CD4-positive, alpha-beta T cell (primary cell): ENCODE measurements at regions of chr2 and their contacts with region 1.

Region 1: GRCh38 chr2:207896525-207897295 is 127.0 kb upstream of the FZD5 start:
- DNase-seq: no peak
- ATAC-seq: no peak
- H3K4me3 ChIP-seq: no peak overlapping the region
- H3K4me3 Mint-ChIP-seq: no peak overlapping the region
- H3K27ac ChIP-seq: no peak overlapping the region
- H3K27ac Mint-ChIP-seq: no peak overlapping the region
- H3K4me1 ChIP-seq: no peaks in the 10 kb centered on the region
- H3K4me1 Mint-ChIP-seq: no peaks in the 10 kb centered on the region
- H3K27me3 ChIP-seq: no peaks in the 10 kb centered on the region
- H3K27me3 Mint-ChIP-seq: no peaks in the 10 kb centered on the region
- CTCF ChIP-seq: no peak

Region 2: GRCh38 chr2:207274530-207275189 is 622.0 kb before region 1 on chr2:
- CTCF ChIA-PET with region 1: no interaction called
- POLR2A ChIA-PET with region 1: no interaction called
- intact Hi-C with region 1: loop called in 1 of 2 experiments (anchors 5 kb)
- DNase-seq: no peak
- ATAC-seq: no peak
- H3K4me3 ChIP-seq: no peak overlapping the region
- H3K4me3 Mint-ChIP-seq: no peak overlapping the region
- H3K27ac ChIP-seq: no peak overlapping the region
- H3K27ac Mint-ChIP-seq: no peak overlapping the region
- H3K4me1 ChIP-seq: no peaks in the 10 kb centered on the region
- H3K4me1 Mint-ChIP-seq: no peaks in the 10 kb centered on the region
- H3K27me3 ChIP-seq: no peaks in the 10 kb centered on the region
- H3K27me3 Mint-ChIP-seq: no peaks in the 10 kb centered on the region
- CTCF ChIP-seq: no peak

Region 3: GRCh38 chr2:207833251-207833751 is 63.4 kb before region 1 on chr2:
- CTCF ChIA-PET with region 1: no interaction called
- POLR2A ChIA-PET with region 1: no interaction called
- intact Hi-C with region 1: no loop called
- DNase-seq: no peak
- ATAC-seq: no peak
- H3K4me3 ChIP-seq: no peak overlapping the region
- H3K4me3 Mint-ChIP-seq: no peak overlapping the region
- H3K27ac ChIP-seq: no peak overlapping the region
- H3K27ac Mint-ChIP-seq: no peak overlapping the region
- H3K4me1 ChIP-seq: peaks cover 3% of the 10 kb centered on the region
- H3K4me1 Mint-ChIP-seq: no peaks in the 10 kb centered on the region
- H3K27me3 ChIP-seq: no peaks in the 10 kb centered on the region
- H3K27me3 Mint-ChIP-seq: no peaks in the 10 kb centered on the region
- CTCF ChIP-seq: no peak

Region 4: DNA sequence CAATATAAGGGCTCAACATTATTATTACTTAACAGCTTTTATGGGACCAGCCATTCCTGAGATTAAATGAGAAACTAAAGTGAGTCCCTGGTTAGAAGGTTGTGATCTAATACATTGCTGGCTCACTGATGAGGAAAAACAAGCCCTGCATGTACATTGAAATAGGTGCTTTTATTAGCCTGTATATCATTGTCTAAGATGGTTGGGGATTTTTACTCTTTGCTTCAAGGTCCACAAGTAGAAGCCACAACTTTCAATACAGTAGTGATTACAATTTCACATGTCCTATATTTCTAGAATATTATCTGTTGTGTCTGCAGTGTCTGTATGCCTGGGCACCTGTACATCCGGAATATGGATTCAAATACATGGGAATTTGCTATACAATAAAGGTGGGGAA is 22.9 kb before region 1 on chr2:
- CTCF ChIA-PET with region 1: no interaction called
- POLR2A ChIA-PET with region 1: no interaction called
- intact Hi-C with region 1: no loop called
- DNase-seq: no peak
- ATAC-seq: no peak
- H3K4me3 ChIP-seq: no peak overlapping the region
- H3K4me3 Mint-ChIP-seq: no peak overlapping the region
- H3K27ac ChIP-seq: no peak overlapping the region
- H3K27ac Mint-ChIP-seq: no peak overlapping the region
- H3K4me1 ChIP-seq: no peaks in the 10 kb centered on the region
- H3K4me1 Mint-ChIP-seq: no peaks in the 10 kb centered on the region
- H3K27me3 ChIP-seq: no peaks in the 10 kb centered on the region
- H3K27me3 Mint-ChIP-seq: no peaks in the 10 kb centered on the region
- CTCF ChIP-seq: no peak